ENCODE measurements at regions of chr11 and their contacts with region 1.

Region 1: GRCh38 chr11:61477727-61478148 is 30.8 kb upstream of the LRRC10B start:
- DNase-seq: peak; percentile 19 to 65 (median 42)
- H3K4me3 ChIP-seq: no peak overlapping the region
- H3K4me3 Mint-ChIP-seq: peak overlapping the region in 1 of 7 donors; percentile 40
- H3K27ac ChIP-seq: no peak overlapping the region
- H3K27ac Mint-ChIP-seq: no peak overlapping the region
- H3K4me1 ChIP-seq: peaks cover 8% of the 10 kb centered on the region
- H3K4me1 Mint-ChIP-seq: peaks cover 6 to 9% (median 6%) of the 10 kb centered on the region in 3 donors
- H3K27me3 ChIP-seq: no peaks in the 10 kb centered on the region
- H3K27me3 Mint-ChIP-seq: peaks cover 0 to 9% of the 10 kb centered on the region in 2 donors

Region 2: DNA sequence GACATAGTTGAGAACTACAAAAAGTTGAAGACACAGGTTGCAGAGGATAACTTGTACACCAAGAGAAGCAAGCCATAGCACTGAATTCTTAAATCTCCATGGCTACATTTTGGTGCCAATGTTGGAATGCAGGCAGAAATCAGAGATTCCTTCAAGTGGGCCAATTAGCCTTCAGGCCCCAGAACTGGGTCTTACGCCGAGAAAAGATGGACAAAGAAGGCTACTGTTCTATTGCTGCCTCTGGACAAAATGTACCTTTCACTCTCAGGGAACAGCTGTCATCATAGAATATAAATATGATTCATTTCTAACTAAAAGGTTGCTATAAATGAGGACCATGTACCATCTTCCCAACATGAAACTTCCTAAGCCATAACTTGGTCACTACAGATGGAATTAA is 71.7 kb before region 1 on chr11:
- CTCF ChIA-PET with region 1: no interaction called
- POLR2A ChIA-PET with region 1: no interaction called
- DNase-seq: no peak
- H3K4me3 ChIP-seq: no peak overlapping the region
- H3K4me3 Mint-ChIP-seq: no peak overlapping the region
- H3K27ac ChIP-seq: no peak overlapping the region
- H3K27ac Mint-ChIP-seq: peak overlapping the region in 1 of 8 donors; percentile 36
- H3K4me1 ChIP-seq: no peaks in the 10 kb centered on the region
- H3K4me1 Mint-ChIP-seq: peaks cover 0 to 1% (median 0%) of the 10 kb centered on the region in 3 donors
- H3K27me3 ChIP-seq: no peaks in the 10 kb centered on the region
- H3K27me3 Mint-ChIP-seq: peaks cover 0 to 2% of the 10 kb centered on the region in 2 donors

Region 3: GRCh38 chr11:61417670-61418069 is 60.1 kb before region 1 on chr11:
- CTCF ChIA-PET with region 1: no interaction called
- POLR2A ChIA-PET with region 1: no interaction called
- DNase-seq: no peak
- H3K4me3 ChIP-seq: no peak overlapping the region
- H3K4me3 Mint-ChIP-seq: no peak overlapping the region
- H3K27ac ChIP-seq: no peak overlapping the region
- H3K27ac Mint-ChIP-seq: peak overlapping the region in 7 of 8 donors; percentile 13 to 86 (median 38)
- H3K4me1 ChIP-seq: no peaks in the 10 kb centered on the region
- H3K4me1 Mint-ChIP-seq: peaks cover 42 to 59% (median 50%) of the 10 kb centered on the region in 3 donors
- H3K27me3 ChIP-seq: no peaks in the 10 kb centered on the region
- H3K27me3 Mint-ChIP-seq: no peaks in the 10 kb centered on the region

Region 4: DNA sequence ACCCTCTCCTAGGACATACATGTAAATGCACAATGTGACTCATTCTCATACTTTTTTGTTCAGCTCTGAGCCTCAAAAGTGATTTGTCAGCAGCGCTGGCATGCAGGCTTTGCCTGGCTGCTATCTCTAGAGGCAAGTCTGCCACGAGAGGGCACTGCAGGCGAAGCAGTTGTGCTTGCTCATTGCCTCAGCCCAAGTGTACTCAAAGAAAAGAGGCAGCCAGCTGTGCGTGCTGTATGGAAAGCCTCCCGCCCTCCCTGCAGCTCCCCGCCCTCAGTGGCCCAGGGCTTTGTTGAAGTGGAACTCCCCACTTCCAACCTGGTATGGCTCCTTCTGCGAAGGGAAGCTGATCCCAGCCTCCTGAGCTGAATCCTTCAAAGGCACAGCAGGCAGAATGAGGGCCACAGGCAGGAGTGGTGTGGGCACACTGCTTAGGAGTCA is 31.5 kb before region 1 on chr11:
- CTCF ChIA-PET with region 1: no interaction called
- POLR2A ChIA-PET with region 1: interaction called, 11 read pairs
- DNase-seq: peak; percentile 20 to 62 (median 33)
- H3K4me3 ChIP-seq: no peak overlapping the region
- H3K4me3 Mint-ChIP-seq: no peak overlapping the region
- H3K27ac ChIP-seq: no peak overlapping the region
- H3K27ac Mint-ChIP-seq: peak overlapping the region in 2 of 8 donors; percentile 47 to 81
- H3K4me1 ChIP-seq: no peaks in the 10 kb centered on the region
- H3K4me1 Mint-ChIP-seq: peaks cover 24 to 25% (median 25%) of the 10 kb centered on the region in 3 donors
- H3K27me3 ChIP-seq: no peaks in the 10 kb centered on the region
- H3K27me3 Mint-ChIP-seq: no peaks in the 10 kb centered on the region

Region 5: DNA sequence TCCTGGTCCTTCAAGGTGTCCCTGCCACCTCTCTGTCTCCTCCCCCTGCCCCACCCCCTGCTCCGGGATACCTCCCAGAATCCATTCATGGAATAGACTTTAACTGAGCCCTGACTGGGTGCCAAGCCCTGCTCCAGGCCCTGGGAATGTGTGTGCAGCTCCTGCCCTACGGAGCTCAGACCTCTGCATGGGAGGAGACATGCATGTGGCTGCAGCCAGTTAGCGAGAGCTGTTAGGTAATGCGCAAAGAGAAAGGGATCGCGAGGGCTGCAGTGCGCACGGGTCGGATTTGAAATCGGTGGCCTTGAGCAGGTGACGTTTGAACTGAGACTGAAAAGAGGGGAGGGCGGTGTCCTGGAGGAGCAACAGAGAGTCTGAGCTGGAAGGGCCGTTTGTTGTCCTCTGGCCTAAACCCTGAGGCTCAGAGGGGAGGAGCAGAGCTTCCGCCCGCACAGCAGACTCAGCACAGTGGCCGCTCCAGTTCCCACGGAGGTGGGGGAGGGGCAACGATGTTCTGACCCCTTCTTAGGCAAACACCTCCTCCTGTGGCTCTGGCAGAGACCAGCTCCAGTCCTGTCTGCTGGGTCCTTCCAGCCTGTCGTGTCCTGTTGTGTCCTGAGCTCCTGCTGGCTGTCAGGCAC is 11.0 kb after region 1 on chr11:
- CTCF ChIA-PET with region 1: interaction called, 10 read pairs
- POLR2A ChIA-PET with region 1: no interaction called
- DNase-seq: no peak
- H3K4me3 ChIP-seq: no peak overlapping the region
- H3K4me3 Mint-ChIP-seq: no peak overlapping the region
- H3K27ac ChIP-seq: no peak overlapping the region
- H3K27ac Mint-ChIP-seq: no peak overlapping the region
- H3K4me1 ChIP-seq: no peaks in the 10 kb centered on the region
- H3K4me1 Mint-ChIP-seq: no peaks in the 10 kb centered on the region
- H3K27me3 ChIP-seq: no peaks in the 10 kb centered on the region
- H3K27me3 Mint-ChIP-seq: peaks cover 0 to 2% of the 10 kb centered on the region in 2 donors

Region 6: GRCh38 chr11:61516675-61517572 is 39.2 kb after region 1 on chr11:
- CTCF ChIA-PET with region 1: interaction called, 21 read pairs
- POLR2A ChIA-PET with region 1: no interaction called
- DNase-seq: peak; percentile 41 to 68 (median 50)
- H3K4me3 ChIP-seq: peak overlapping the region; percentile 61
- H3K4me3 Mint-ChIP-seq: peak overlapping the region in 6 of 7 donors; percentile 47 to 72 (median 63)
- H3K27ac ChIP-seq: no peak overlapping the region
- H3K27ac Mint-ChIP-seq: peak overlapping the region in 2 of 8 donors; percentile 57 to 68
- H3K4me1 ChIP-seq: peaks cover 9% of the 10 kb centered on the region
- H3K4me1 Mint-ChIP-seq: peaks cover 6 to 12% (median 7%) of the 10 kb centered on the region in 3 donors
- H3K27me3 ChIP-seq: peaks cover 11% of the 10 kb centered on the region
- H3K27me3 Mint-ChIP-seq: peaks cover 14 to 32% of the 10 kb centered on the region in 2 donors

Region 7: DNA sequence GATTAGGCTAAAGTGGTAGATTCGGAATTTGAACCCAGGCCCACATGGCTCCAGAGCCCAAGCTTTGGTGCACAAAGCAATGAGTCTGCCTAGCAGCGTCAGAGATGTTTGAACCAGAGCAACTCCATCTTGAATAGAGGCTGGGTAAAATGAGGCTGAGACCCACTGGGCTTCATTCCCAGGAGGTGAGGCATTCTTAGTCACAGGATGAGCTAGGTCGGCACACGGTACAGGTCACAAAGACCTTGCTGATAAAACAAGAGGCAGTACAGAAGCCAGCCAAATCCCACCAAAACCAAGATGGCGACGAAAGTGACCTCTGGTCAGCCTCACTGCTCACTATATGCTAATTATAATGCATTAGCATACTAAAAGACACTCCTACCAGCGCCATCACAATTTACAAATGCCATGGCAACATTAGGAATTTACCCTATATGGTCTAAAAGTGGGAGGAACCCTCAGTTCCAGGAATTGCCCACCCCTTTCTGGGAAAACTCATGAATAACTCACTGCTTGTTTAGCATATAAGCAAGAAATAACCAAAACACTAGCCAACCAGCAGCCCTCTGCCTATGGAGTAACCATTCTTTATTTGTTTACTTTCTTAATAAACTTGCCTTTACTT is 162.2 kb after region 1 on chr11:
- CTCF ChIA-PET with region 1: interaction called, 10 read pairs
- POLR2A ChIA-PET with region 1: interaction called, 4 read pairs
- DNase-seq: no peak
- H3K4me3 ChIP-seq: no peak overlapping the region
- H3K4me3 Mint-ChIP-seq: no peak overlapping the region
- H3K27ac ChIP-seq: no peak overlapping the region
- H3K27ac Mint-ChIP-seq: no peak overlapping the region
- H3K4me1 ChIP-seq: no peaks in the 10 kb centered on the region
- H3K4me1 Mint-ChIP-seq: no peaks in the 10 kb centered on the region
- H3K27me3 ChIP-seq: no peaks in the 10 kb centered on the region
- H3K27me3 Mint-ChIP-seq: peaks cover 0 to 6% of the 10 kb centered on the region in 2 donors

Measured in CD8-positive, alpha-beta memory T cell (primary cell).